Activated naive CD4-positive, alpha-beta T cell treated with anti-CD3 and anti-CD28 coated beads for 36 hours (primary cell): ENCODE measurements at regions of chr12 and their contacts with region 1.

Region 1: GRCh38 chr12:26878661-26879119 is 45.7 kb upstream of the ITPR2 start:
- DNase-seq: no peak
- H3K4me3 Mint-ChIP-seq: no peak overlapping the region
- H3K27ac Mint-ChIP-seq: no peak overlapping the region
- H3K4me1 Mint-ChIP-seq: no peaks in the 10 kb centered on the region
- H3K27me3 Mint-ChIP-seq: peaks cover 6% of the 10 kb centered on the region

Region 2: GRCh38 chr12:26629864-26630263 is 248.8 kb before region 1 on chr12:
- CTCF ChIA-PET with region 1: no interaction called
- intact Hi-C with region 1: loop called (anchors 1 kb)
- DNase-seq: peak; percentile 11
- H3K4me3 Mint-ChIP-seq: no peak overlapping the region
- H3K27ac Mint-ChIP-seq: no peak overlapping the region
- H3K4me1 Mint-ChIP-seq: no peaks in the 10 kb centered on the region
- H3K27me3 Mint-ChIP-seq: no peaks in the 10 kb centered on the region

Region 3: GRCh38 chr12:26791301-26791791 is 87.3 kb before region 1 on chr12:
- CTCF ChIA-PET with region 1: no interaction called
- intact Hi-C with region 1: no loop called
- DNase-seq: no peak
- H3K4me3 Mint-ChIP-seq: no peak overlapping the region
- H3K27ac Mint-ChIP-seq: no peak overlapping the region
- H3K4me1 Mint-ChIP-seq: peaks cover 34% of the 10 kb centered on the region
- H3K27me3 Mint-ChIP-seq: no peaks in the 10 kb centered on the region